ENCODE measurements at regions of chr3 and their contacts with region 1.

Region 1: DNA sequence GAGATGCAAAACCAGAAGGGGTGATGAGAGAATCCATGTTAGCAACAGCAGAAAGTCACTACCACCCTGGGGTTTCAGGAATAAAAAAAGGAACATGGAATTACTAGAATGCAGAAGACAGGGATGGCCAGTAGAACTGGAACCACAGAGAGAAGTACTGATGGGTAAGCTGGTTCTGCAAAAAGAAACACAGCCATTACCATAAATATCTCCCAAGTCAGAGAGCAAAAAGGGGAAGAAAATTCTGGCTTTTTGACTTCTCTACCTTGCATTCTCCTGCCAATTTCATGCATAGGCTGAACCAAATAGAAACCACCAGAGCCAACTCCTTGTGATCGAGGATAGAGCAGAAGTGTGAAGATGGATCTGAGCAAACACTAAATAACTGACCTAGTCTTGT is 550.4 kb upstream of the NAALADL2 start:
- DNase-seq: no peak

Region 2: GRCh38 chr3:174072675-174073074 is 236.1 kb before region 1 on chr3:
- intact Hi-C with region 1: loop called in 1 of 2 experiments (anchors 5 kb)
- DNase-seq: no peak

Region 3: DNA sequence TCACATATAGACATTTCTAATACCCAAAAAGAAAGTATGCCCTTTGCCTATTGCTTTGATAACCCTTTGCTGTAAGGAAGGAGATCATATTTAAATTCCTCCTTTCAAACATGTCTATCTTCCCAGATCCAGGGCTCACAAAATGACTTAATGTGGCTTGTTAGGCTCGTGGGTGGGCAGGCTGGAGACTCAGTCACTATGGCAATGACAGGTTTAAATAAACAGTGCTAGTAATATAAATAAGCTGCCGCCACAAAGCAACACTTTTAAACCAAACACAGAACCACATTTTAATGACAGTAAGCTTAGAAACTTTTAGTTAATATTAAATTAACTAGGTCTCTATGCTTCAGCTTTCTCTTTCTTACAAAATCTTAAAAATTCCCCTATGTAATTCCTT is 65.6 kb before region 1 on chr3:
- intact Hi-C with region 1: no loop called
- DNase-seq: no peak

Measured in posterior vena cava (tissue), 2 donors.